ENCODE measurements at regions of chr3 and their contacts with region 1.

Region 1: DNA sequence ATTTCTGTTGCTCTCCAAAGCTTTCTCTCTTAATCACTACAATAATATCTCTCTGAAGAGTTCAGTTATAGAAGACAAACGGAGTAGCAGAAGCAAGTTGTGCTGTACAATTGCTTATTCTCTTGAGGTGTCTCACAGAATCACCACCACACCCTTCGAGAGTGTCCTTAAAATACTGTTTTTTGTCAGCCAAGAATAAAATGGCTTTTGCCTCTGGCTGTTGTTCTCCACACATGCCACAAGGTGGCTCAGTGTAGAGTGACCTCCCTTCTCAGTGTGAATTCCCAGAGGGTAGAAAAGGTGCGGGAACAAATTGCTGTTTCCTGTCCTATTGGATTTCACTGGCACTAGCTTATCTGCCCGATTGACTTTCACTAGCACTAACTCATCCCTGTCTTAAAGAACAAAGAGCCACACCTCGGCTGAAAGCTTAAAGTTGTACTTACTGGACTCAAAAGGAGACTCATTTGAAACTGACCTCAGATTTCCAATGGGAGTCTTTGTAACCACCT is 134.2 kb upstream of the SATB1 start:
- DNase-seq: peak in 4 of 5 donors; percentile 38 to 52 (median 48)
- H3K4me3 ChIP-seq: no peak overlapping the region
- H3K4me3 Mint-ChIP-seq: peak overlapping the region in 6 of 8 donors; percentile 50 to 73 (median 58)
- H3K27ac ChIP-seq: no peak overlapping the region
- H3K27ac Mint-ChIP-seq: peak overlapping the region in 6 of 7 donors; percentile 55 to 85 (median 77)
- H3K4me1 ChIP-seq: peaks cover 43% of the 10 kb centered on the region
- H3K4me1 Mint-ChIP-seq: peaks cover 22 to 61% (median 41%) of the 10 kb centered on the region in 4 donors
- H3K27me3 ChIP-seq: no peaks in the 10 kb centered on the region
- H3K27me3 Mint-ChIP-seq: no peaks in the 10 kb centered on the region

Region 2: GRCh38 chr3:18389108-18389733 is 170.2 kb before region 1 on chr3:
- CTCF ChIA-PET with region 1: interaction called, 15 read pairs
- POLR2A ChIA-PET with region 1: no interaction called
- intact Hi-C with region 1: no loop called
- DNase-seq: peak in 4 of 5 donors; percentile 29 to 45 (median 36)
- H3K4me3 ChIP-seq: no peak overlapping the region
- H3K4me3 Mint-ChIP-seq: peak overlapping the region in 1 of 8 donors; percentile 43
- H3K27ac ChIP-seq: no peak overlapping the region
- H3K27ac Mint-ChIP-seq: peak overlapping the region in 2 of 7 donors; percentile 22 to 69
- H3K4me1 ChIP-seq: peaks cover 29% of the 10 kb centered on the region
- H3K4me1 Mint-ChIP-seq: peaks cover 15 to 53% (median 27%) of the 10 kb centered on the region in 4 donors
- H3K27me3 ChIP-seq: no peaks in the 10 kb centered on the region
- H3K27me3 Mint-ChIP-seq: no peaks in the 10 kb centered on the region

Region 3: DNA sequence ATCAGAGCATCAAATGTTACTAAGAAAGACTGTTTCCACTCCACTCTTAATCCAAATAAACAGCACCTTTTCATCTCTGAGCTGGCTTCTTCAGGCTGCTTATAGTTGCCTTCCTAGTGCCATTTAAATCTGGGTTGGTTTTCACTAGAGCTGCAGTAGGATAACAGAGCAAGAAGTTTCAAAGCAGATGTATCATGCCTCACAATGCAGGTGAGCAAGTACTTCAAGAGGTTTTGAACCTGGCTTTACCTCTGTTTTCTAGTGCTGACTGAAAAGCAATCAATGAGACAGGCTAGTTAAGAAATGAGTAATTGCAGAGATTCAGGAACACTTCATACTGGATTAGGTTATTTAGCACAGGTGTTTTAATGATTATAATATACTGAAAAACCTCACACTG is 13.4 kb after region 1 on chr3:
- CTCF ChIA-PET with region 1: interaction called, 52 read pairs
- POLR2A ChIA-PET with region 1: interaction called, 6 read pairs
- intact Hi-C with region 1: no loop called
- DNase-seq: no peak
- H3K4me3 ChIP-seq: no peak overlapping the region
- H3K4me3 Mint-ChIP-seq: no peak overlapping the region
- H3K27ac ChIP-seq: no peak overlapping the region
- H3K27ac Mint-ChIP-seq: no peak overlapping the region
- H3K4me1 ChIP-seq: no peaks in the 10 kb centered on the region
- H3K4me1 Mint-ChIP-seq: no peaks in the 10 kb centered on the region
- H3K27me3 ChIP-seq: no peaks in the 10 kb centered on the region
- H3K27me3 Mint-ChIP-seq: no peaks in the 10 kb centered on the region

Region 4: DNA sequence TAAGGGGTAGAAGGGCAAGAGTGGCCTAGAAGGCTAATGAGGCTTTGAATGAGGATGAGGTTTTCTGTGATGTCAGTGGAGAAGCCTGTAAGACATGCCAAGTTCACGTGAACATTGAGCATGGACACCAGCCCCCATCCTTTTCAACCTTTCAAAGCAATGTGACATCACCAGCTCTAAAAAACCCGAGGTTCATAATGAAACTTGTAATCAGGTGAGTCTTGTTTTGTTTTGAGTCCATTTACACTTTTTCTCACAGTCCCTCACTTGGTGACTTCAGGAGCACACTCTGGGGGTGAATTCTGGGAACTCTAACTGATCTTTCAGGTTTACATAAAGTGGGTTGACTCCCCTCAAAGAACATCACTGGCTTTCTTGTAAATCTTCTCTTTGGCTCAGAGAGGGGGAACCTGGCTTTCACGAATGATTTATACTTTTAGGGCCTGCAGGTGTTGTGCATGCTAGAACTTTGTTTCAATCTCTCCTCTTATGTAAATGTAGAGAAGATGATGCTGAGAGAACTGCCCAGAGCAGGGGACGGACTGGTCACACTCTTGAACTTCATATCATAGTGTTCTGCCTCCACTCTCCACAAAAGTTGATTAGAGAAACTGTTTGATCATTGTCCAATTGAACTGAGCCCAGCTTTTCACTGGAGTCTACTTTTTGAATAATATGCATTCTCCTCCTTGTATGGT is 90.4 kb after region 1 on chr3:
- CTCF ChIA-PET with region 1: interaction called, 5 read pairs
- POLR2A ChIA-PET with region 1: no interaction called
- intact Hi-C with region 1: loop called (anchors 10 kb)
- DNase-seq: peak; percentile 23 to 40 (median 40)
- H3K4me3 ChIP-seq: no peak overlapping the region
- H3K4me3 Mint-ChIP-seq: peak overlapping the region in 5 of 8 donors; percentile 1 to 57 (median 12)
- H3K27ac ChIP-seq: no peak overlapping the region
- H3K27ac Mint-ChIP-seq: peak overlapping the region in 5 of 7 donors; percentile 28 to 86 (median 71)
- H3K4me1 ChIP-seq: peaks cover 15% of the 10 kb centered on the region
- H3K4me1 Mint-ChIP-seq: peaks cover 13 to 41% (median 21%) of the 10 kb centered on the region in 4 donors
- H3K27me3 ChIP-seq: no peaks in the 10 kb centered on the region
- H3K27me3 Mint-ChIP-seq: no peaks in the 10 kb centered on the region

Region 5: GRCh38 chr3:18717598-18717997 is 158.2 kb after region 1 on chr3:
- CTCF ChIA-PET with region 1: interaction called, 40 read pairs
- POLR2A ChIA-PET with region 1: interaction called, 5 read pairs
- intact Hi-C with region 1: no loop called
- DNase-seq: no peak
- H3K4me3 ChIP-seq: no peak overlapping the region
- H3K4me3 Mint-ChIP-seq: peak overlapping the region in 6 of 8 donors; percentile 14 to 66 (median 51)
- H3K27ac ChIP-seq: no peak overlapping the region
- H3K27ac Mint-ChIP-seq: peak overlapping the region; percentile 33 to 85 (median 61)
- H3K4me1 ChIP-seq: peaks cover 58% of the 10 kb centered on the region
- H3K4me1 Mint-ChIP-seq: peaks cover 50 to 68% (median 62%) of the 10 kb centered on the region in 4 donors
- H3K27me3 ChIP-seq: no peaks in the 10 kb centered on the region
- H3K27me3 Mint-ChIP-seq: no peaks in the 10 kb centered on the region

Region 6: GRCh38 chr3:18725668-18726407 is 166.5 kb after region 1 on chr3:
- CTCF ChIA-PET with region 1: interaction called, 21 read pairs
- POLR2A ChIA-PET with region 1: no interaction called
- intact Hi-C with region 1: no loop called
- DNase-seq: peak; percentile 56 to 74 (median 68)
- H3K4me3 ChIP-seq: peak overlapping the region in 1 of 2 donors; percentile 6
- H3K4me3 Mint-ChIP-seq: peak overlapping the region; percentile 56 to 80 (median 76)
- H3K27ac ChIP-seq: peak overlapping the region; percentile 53
- H3K27ac Mint-ChIP-seq: peak overlapping the region; percentile 92 to 99 (median 94)
- H3K4me1 ChIP-seq: peaks cover 74% of the 10 kb centered on the region
- H3K4me1 Mint-ChIP-seq: peaks cover 64 to 79% (median 72%) of the 10 kb centered on the region in 4 donors
- H3K27me3 ChIP-seq: no peaks in the 10 kb centered on the region
- H3K27me3 Mint-ChIP-seq: no peaks in the 10 kb centered on the region

Region 7: DNA sequence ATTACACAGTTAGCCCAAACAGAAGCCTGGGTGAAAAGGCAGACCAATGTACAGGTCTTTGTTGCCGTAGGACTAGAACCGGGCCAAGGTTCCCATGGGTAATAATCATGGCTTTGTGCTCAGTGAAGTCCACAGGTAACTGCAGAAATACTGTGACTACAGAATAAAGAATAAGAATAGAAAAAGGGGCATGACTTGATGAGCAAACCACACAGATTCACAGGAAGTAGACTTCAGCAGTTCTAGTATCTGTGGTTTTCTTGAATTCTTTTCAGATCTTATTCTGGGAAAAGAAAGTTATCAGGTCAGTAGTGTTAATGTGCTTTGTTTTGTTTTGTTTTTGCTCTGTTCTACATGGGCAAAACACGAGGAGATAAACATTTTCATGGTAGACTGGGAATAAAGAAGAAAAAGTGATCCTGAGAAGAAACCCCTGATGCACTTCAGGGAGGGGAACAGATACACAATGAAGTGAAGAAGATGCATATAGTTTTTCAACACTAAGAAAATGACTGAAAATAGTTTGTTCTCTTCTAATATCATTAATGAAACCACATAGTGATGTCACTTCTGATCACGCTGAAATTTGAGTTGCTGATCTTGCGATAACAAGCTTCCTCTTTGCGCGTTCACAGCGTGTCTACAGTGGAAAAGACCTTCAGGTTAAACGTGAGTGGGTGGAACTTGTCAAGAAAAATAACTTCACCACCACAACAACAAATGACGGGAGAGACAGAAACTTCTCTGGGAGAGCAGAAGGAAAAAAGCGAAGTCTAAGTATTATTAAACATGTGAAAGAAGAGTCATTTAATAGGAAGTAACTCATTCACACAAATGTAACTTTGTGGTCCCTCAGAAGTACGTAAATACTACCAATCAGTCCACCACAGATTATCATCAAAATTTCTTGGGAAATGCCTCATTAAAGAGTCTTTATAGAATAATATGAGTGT is 181.5 kb after region 1 on chr3:
- CTCF ChIA-PET with region 1: interaction called, 12 read pairs
- POLR2A ChIA-PET with region 1: interaction called, 3 read pairs
- intact Hi-C with region 1: loop called (anchors 5 kb)
- DNase-seq: peak; percentile 78 to 87 (median 82)
- H3K4me3 ChIP-seq: peak overlapping the region in 1 of 2 donors; percentile 35
- H3K4me3 Mint-ChIP-seq: peak overlapping the region; percentile 69 to 87 (median 81)
- H3K27ac ChIP-seq: peak overlapping the region; percentile 60
- H3K27ac Mint-ChIP-seq: peak overlapping the region; percentile 88 to 97 (median 95)
- H3K4me1 ChIP-seq: peaks cover 79% of the 10 kb centered on the region
- H3K4me1 Mint-ChIP-seq: peaks cover 67 to 77% (median 72%) of the 10 kb centered on the region in 4 donors
- H3K27me3 ChIP-seq: no peaks in the 10 kb centered on the region
- H3K27me3 Mint-ChIP-seq: no peaks in the 10 kb centered on the region

Region 8: DNA sequence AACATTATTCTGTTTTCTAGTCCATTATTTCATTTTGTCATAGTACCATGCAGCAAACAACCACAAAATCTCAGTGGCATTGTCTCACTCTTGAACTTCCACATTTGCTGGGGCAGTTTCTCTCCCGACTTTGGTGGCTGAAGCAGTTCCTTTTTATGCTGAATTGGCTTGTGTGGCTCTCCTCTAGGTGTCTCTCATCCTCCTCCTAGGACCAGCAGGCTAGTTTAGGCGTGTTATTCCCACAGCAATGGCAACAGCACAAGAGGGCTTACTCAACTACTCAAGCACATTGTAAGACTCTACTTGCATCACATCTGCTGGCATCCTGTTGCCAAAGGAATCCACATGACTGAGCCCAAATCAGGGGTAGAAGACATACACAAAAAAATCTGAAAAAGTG is 387.1 kb after region 1 on chr3:
- CTCF ChIA-PET with region 1: no interaction called
- POLR2A ChIA-PET with region 1: no interaction called
- intact Hi-C with region 1: no loop called
- DNase-seq: no peak
- H3K4me3 ChIP-seq: no peak overlapping the region
- H3K4me3 Mint-ChIP-seq: no peak overlapping the region
- H3K27ac ChIP-seq: no peak overlapping the region
- H3K27ac Mint-ChIP-seq: no peak overlapping the region
- H3K4me1 ChIP-seq: no peaks in the 10 kb centered on the region
- H3K4me1 Mint-ChIP-seq: no peaks in the 10 kb centered on the region
- H3K27me3 ChIP-seq: no peaks in the 10 kb centered on the region
- H3K27me3 Mint-ChIP-seq: peaks cover 6 to 8% of the 10 kb centered on the region in 2 donors

Region 9: GRCh38 chr3:19199131-19199530 is 639.7 kb after region 1 on chr3:
- CTCF ChIA-PET with region 1: no interaction called
- POLR2A ChIA-PET with region 1: no interaction called
- intact Hi-C with region 1: no loop called
- DNase-seq: no peak
- H3K4me3 ChIP-seq: no peak overlapping the region
- H3K4me3 Mint-ChIP-seq: no peak overlapping the region
- H3K27ac ChIP-seq: no peak overlapping the region
- H3K27ac Mint-ChIP-seq: no peak overlapping the region
- H3K4me1 ChIP-seq: no peaks in the 10 kb centered on the region
- H3K4me1 Mint-ChIP-seq: no peaks in the 10 kb centered on the region
- H3K27me3 ChIP-seq: no peaks in the 10 kb centered on the region
- H3K27me3 Mint-ChIP-seq: peaks cover 0 to 3% of the 10 kb centered on the region in 2 donors